GM10248 (cell line): ENCODE measurements at regions of chr14 and their contacts with region 1.

Region 1: GRCh38 chr14:60184146-60184904 is 19.1 kb upstream of the DHRS7 start:
- DNase-seq: peak; percentile 22
- CTCF ChIP-seq: peak; percentile 51

Region 2: GRCh38 chr14:60064491-60065072 is 119.7 kb before region 1 on chr14:
- CTCF ChIA-PET with region 1: interaction called, 60 read pairs
- POLR2A ChIA-PET with region 1: no interaction called
- DNase-seq: peak; percentile 42
- CTCF ChIP-seq: peak; percentile 47

Region 3: GRCh38 chr14:60164712-60165546 is 19.4 kb before region 1 on chr14 and contains the start of gene DHRS7:
- CTCF ChIA-PET with region 1: interaction called, 30 read pairs
- POLR2A ChIA-PET with region 1: no interaction called
- DNase-seq: peak; percentile 88
- CTCF ChIP-seq: peak; percentile 80

Region 4: GRCh38 chr14:60204104-60204842 is 19.9 kb after region 1 on chr14:
- CTCF ChIA-PET with region 1: interaction called, 25 read pairs
- POLR2A ChIA-PET with region 1: no interaction called
- DNase-seq: no peak
- CTCF ChIP-seq: no peak